Right ventricle myocardium inferior (tissue), 1 donor: ENCODE measurements at regions of chr1 and their contacts with region 1.

Region 1: GRCh38 chr1:11735854-11736745 is at the start of gene AGTRAP:
- DNase-seq: peak; percentile 99
- ATAC-seq: peak; percentile 89
- total RNA-seq, gene AGTRAP: 18.3 TPM

Region 2: DNA sequence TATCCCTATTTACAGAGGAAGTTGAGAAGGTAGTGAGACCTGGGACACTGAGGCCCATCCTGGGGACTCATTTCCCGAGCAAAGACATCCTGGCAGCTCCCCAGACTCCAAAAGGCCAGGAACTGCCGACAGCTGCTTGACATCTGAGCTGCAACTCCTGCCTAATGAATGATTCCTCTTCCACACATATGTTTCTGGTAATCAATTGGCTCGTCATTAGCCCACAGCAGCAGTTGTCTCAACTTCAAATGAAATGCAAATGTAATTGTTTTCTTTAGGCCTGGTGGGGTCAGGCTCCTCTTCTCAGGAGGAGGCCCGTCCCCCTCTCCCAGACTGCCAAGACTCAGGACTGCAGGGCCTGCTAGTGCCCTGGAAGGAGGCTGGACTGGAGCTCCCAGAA is 318.9 kb before region 1 on chr1:
- intact Hi-C with region 1: no loop called
- DNase-seq: no peak
- ATAC-seq: no peak

Region 3: DNA sequence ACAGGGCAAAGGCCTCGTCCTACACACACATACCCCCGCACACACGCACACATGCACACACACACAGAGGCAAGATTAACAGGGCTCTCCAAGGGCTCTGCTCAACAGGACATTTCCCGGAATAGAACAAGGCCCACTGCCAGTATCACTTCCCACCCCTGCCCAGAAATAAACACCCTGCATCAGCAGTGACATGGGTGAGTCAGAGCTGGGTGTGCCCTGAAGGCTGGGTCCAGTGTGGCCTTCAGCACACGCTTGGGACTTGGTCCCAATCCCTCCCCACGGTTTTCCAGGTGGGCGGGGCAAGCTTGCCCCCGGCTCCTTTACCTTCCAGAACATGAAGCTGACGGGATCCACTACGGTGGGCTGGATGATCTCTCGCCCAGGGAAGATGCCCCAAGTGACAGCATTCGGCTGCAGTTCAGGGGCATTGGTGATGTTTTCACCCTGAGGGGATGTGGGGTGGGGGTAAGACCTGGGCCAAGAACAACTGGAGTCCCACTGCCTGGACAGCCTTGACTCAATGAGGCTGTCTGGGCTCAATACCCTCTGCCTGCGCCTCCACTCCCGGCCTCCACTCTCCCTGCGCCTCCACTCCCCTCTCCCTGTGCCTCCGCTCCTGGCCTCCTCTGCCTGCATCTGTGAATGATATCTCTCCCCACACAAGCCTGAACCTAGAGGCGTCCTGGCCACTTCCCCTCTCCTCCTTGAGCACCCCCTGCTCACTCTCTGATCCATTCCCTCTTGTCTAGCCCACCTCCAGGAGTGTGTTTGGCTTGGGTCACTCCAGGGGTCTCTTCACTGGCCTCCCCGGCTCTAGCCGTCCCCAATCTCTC is 55.0 kb after region 1 on chr1:
- intact Hi-C with region 1: no loop called
- DNase-seq: peak; percentile 92
- ATAC-seq: peak; percentile 82

Region 4: GRCh38 chr1:11805447-11806306 is 69.6 kb after region 1 on chr1 and contains the starts of genes CLCN6 and MTHFR:
- intact Hi-C with region 1: loop called (anchors 2 kb)
- DNase-seq: peak; percentile 99
- ATAC-seq: peak; percentile 88
- total RNA-seq, gene CLCN6: 15.7 TPM
- total RNA-seq, gene MTHFR: 34.1 TPM